GM12878 (cell line): ENCODE measurements at regions of chr5 and their contacts with region 1.

Region 1: GRCh38 chr5:78269088-78269703 is 25.3 kb downstream of the AP3B1 start:
- DNase-seq: no peak
- ATAC-seq: peak; percentile 84
- H3K4me3 ChIP-seq: no peak overlapping the region
- H3K27ac ChIP-seq: no peak overlapping the region
- H3K4me1 ChIP-seq: peaks cover 10% of the 10 kb centered on the region; the same call in 1 of the 2 replicates
- H3K27me3 ChIP-seq: no peaks in the 10 kb centered on the region
- CTCF ChIP-seq: peak in 2 of 3 experiments; percentile 17 to 42; a peak in 4 of 6 replicates
- EP300 ChIP-seq: no peak
- POLR2A ChIP-seq: no peak
- RAD21 ChIP-seq: peak; percentile 42; the same call in 1 of the 2 replicates

Region 2: DNA sequence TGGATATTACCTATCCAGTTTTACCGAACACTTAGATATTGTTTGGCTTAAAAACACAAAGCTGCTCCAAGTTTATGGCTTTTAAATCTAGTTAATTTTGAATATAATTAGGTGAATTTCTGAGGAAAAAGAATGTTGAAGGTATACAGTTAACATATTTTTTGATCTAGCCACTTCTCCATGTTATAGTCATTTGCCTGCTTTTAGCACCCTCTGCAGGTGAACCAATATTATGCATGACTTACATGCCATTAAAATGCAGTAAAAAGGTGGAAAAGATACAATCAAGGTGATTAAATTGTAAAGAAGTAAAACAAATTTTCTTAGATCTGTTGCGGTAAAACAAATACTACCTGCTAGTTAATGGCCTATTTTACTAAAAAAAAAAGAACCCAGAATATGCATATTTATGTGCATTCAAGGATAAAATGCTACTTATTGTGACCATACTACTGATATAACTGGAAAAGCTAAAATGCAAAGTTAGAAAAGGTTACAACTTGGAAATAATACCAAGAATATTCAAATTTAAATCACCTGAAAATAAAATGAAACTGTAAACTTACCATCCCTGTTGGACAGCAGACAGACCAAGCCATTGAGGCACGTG is 106.8 kb before region 1 on chr5:
- CTCF ChIA-PET with region 1: interaction called, 11 read pairs
- POLR2A ChIA-PET with region 1: no interaction called
- RAD21 ChIA-PET with region 1: interaction called, 8 read pairs
- SMC1A ChIA-PET with region 1: interaction called, 3 read pairs
- in situ Hi-C with region 1: no loop called
- intact Hi-C with region 1: no loop called
- DNase-seq: no peak
- ATAC-seq: peak; percentile 61
- H3K4me3 ChIP-seq: no peak overlapping the region
- H3K27ac ChIP-seq: no peak overlapping the region
- H3K4me1 ChIP-seq: no peaks in the 10 kb centered on the region
- H3K27me3 ChIP-seq: no peaks in the 10 kb centered on the region
- CTCF ChIP-seq: peak; percentile 47 to 66 (median 47); a peak in 5 of 6 replicates
- EP300 ChIP-seq: no peak
- POLR2A ChIP-seq: no peak
- RAD21 ChIP-seq: peak; percentile 82

Region 3: GRCh38 chr5:78253201-78253600 is 16.0 kb before region 1 on chr5:
- CTCF ChIA-PET with region 1: interaction called, 25 read pairs
- POLR2A ChIA-PET with region 1: interaction called, 3 read pairs
- RAD21 ChIA-PET with region 1: interaction called, 3 read pairs
- SMC1A ChIA-PET with region 1: interaction called, 5 read pairs
- in situ Hi-C with region 1: no loop called
- intact Hi-C with region 1: no loop called
- DNase-seq: no peak
- ATAC-seq: no peak
- H3K4me3 ChIP-seq: no peak overlapping the region
- H3K27ac ChIP-seq: no peak overlapping the region
- H3K4me1 ChIP-seq: no peaks in the 10 kb centered on the region
- H3K27me3 ChIP-seq: no peaks in the 10 kb centered on the region
- CTCF ChIP-seq: no peak
- EP300 ChIP-seq: no peak
- POLR2A ChIP-seq: no peak
- RAD21 ChIP-seq: no peak

Region 4: GRCh38 chr5:78345485-78345884 is 76.3 kb after region 1 on chr5:
- CTCF ChIA-PET with region 1: no interaction called
- POLR2A ChIA-PET with region 1: no interaction called
- RAD21 ChIA-PET with region 1: no interaction called
- SMC1A ChIA-PET with region 1: no interaction called
- in situ Hi-C with region 1: no loop called
- intact Hi-C with region 1: no loop called
- DNase-seq: no peak
- ATAC-seq: peak; percentile 67
- H3K4me3 ChIP-seq: no peak overlapping the region
- H3K27ac ChIP-seq: peak overlapping the region; percentile 33; the same call in 1 of the 2 replicates
- H3K4me1 ChIP-seq: peaks cover 5% of the 10 kb centered on the region
- H3K27me3 ChIP-seq: no peaks in the 10 kb centered on the region
- CTCF ChIP-seq: no peak
- EP300 ChIP-seq: no peak
- POLR2A ChIP-seq: no peak
- RAD21 ChIP-seq: no peak